ENCODE measurements at regions of chr2 and their contacts with region 1.

Region 1: GRCh38 chr2:176126929-176127773 is 2.4 kb upstream of the HOXD8 start:
- DNase-seq: peak in 1 of 2 donors; percentile 59
- ATAC-seq: no peak
- H3K4me3 ChIP-seq: peak overlapping the region; percentile 49
- H3K27ac ChIP-seq: no peak overlapping the region
- H3K4me1 ChIP-seq: peaks cover 29% of the 10 kb centered on the region
- H3K27me3 ChIP-seq: peaks cover 0 to 4% (median 2%) of the 10 kb centered on the region in 3 donors
- CTCF ChIP-seq: peak; percentile 96

Region 2: GRCh38 chr2:176454893-176455811 is 328.0 kb after region 1 on chr2:
- intact Hi-C with region 1: loop called (anchors 5 kb)
- DNase-seq: peak; percentile 77 to 88
- ATAC-seq: peak; percentile 64 to 89 (median 84)
- H3K4me3 ChIP-seq: no peak overlapping the region
- H3K27ac ChIP-seq: peak overlapping the region; percentile 19
- H3K4me1 ChIP-seq: peaks cover 3% of the 10 kb centered on the region
- H3K27me3 ChIP-seq: no peaks in the 10 kb centered on the region
- CTCF ChIP-seq: peak; percentile 98

Region 3: DNA sequence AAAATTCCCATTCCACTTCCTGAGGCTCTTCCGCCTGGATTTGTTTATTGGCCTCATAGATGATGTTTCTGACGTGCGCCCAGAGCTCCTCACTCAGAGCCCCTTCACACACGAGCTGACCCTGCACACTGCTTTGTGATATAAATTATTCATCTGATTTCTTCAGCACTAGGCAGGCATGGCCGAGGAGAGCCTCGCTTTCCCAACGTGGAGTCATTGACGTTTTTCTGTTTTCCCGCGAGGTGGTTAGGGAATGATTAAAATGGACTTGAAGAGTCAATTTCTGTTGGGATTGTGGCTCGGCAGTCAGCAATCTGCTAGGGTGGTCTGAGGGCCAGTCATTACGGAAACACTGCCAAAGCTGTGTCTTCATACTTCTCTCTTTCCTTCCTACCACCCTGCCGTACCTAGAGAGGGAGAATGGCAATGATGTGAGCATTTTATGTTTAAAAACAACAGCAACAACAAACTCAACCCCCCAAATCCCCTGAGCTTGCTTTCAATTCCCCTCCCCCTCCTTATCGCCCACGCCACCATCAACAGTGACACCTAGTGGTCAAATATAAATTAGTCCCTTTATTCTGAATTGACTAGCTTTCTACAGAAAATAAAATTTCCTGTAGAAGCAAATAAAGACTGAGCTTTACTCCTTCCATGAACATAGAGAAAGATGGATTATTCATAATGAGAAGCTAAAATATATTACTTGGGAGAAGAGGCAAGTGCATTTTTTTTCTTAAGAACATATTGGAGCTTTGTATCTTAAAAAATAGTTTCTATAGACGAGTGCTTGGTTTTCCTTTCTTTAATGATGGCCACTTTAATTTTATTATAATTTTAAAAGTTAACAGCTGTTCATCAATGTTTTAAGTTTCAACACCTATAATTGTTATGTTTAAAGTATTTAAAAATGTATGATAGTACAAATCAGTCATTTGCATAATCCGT is 427.2 kb after region 1 on chr2:
- intact Hi-C with region 1: loop called in 1 of 2 experiments (anchors 5 kb)
- DNase-seq: no peak
- ATAC-seq: peak; percentile 61 to 91 (median 84)
- H3K4me3 ChIP-seq: peak overlapping the region; percentile 74
- H3K27ac ChIP-seq: peak overlapping the region; percentile 57
- H3K4me1 ChIP-seq: peaks cover 12% of the 10 kb centered on the region
- H3K27me3 ChIP-seq: no peaks in the 10 kb centered on the region
- CTCF ChIP-seq: peak; percentile 82

Region 4: GRCh38 chr2:176638167-176639015 is 511.2 kb after region 1 on chr2:
- intact Hi-C with region 1: loop called (anchors 1 to 5 kb)
- DNase-seq: peak; percentile 77 to 83
- ATAC-seq: peak; percentile 89 to 98 (median 92)
- H3K4me3 ChIP-seq: peak overlapping the region; percentile 87
- H3K27ac ChIP-seq: peak overlapping the region; percentile 39
- H3K4me1 ChIP-seq: no peaks in the 10 kb centered on the region
- H3K27me3 ChIP-seq: peaks cover 0 to 16% (median 0%) of the 10 kb centered on the region in 3 donors
- CTCF ChIP-seq: peak; percentile 88

Region 5: GRCh38 chr2:176653479-176654443 is 526.6 kb after region 1 on chr2:
- intact Hi-C with region 1: loop called (anchors 2 to 5 kb)
- DNase-seq: peak; percentile 58 to 76
- ATAC-seq: peak; percentile 83 to 99 (median 90)
- H3K4me3 ChIP-seq: no peak overlapping the region
- H3K27ac ChIP-seq: no peak overlapping the region
- H3K4me1 ChIP-seq: peaks cover 6% of the 10 kb centered on the region
- H3K27me3 ChIP-seq: no peaks in the 10 kb centered on the region
- CTCF ChIP-seq: peak; percentile 78

Region 6: GRCh38 chr2:176804392-176804791 is 677.2 kb after region 1 on chr2:
- intact Hi-C with region 1: no loop called
- DNase-seq: no peak
- ATAC-seq: no peak
- H3K4me3 ChIP-seq: no peak overlapping the region
- H3K27ac ChIP-seq: no peak overlapping the region
- H3K4me1 ChIP-seq: no peaks in the 10 kb centered on the region
- H3K27me3 ChIP-seq: no peaks in the 10 kb centered on the region
- CTCF ChIP-seq: no peak

Region 7: GRCh38 chr2:176814306-176815052 is 687.3 kb after region 1 on chr2:
- intact Hi-C with region 1: loop called in 1 of 2 experiments (anchors 5 kb)
- DNase-seq: no peak
- ATAC-seq: no peak
- H3K4me3 ChIP-seq: no peak overlapping the region
- H3K27ac ChIP-seq: no peak overlapping the region
- H3K4me1 ChIP-seq: no peaks in the 10 kb centered on the region
- H3K27me3 ChIP-seq: no peaks in the 10 kb centered on the region
- CTCF ChIP-seq: peak; percentile 78

Region 8: GRCh38 chr2:177148477-177149154 is 1021.5 kb after region 1 on chr2:
- intact Hi-C with region 1: loop called (anchors 5 kb)
- DNase-seq: peak; percentile 67 to 72
- ATAC-seq: peak; percentile 77 to 97 (median 90)
- H3K4me3 ChIP-seq: peak overlapping the region; percentile 66
- H3K27ac ChIP-seq: no peak overlapping the region
- H3K4me1 ChIP-seq: peaks cover 4% of the 10 kb centered on the region
- H3K27me3 ChIP-seq: no peaks in the 10 kb centered on the region
- CTCF ChIP-seq: peak; percentile 81